ENCODE measurements at regions of chr10 and their contacts with region 1.

Region 1: DNA sequence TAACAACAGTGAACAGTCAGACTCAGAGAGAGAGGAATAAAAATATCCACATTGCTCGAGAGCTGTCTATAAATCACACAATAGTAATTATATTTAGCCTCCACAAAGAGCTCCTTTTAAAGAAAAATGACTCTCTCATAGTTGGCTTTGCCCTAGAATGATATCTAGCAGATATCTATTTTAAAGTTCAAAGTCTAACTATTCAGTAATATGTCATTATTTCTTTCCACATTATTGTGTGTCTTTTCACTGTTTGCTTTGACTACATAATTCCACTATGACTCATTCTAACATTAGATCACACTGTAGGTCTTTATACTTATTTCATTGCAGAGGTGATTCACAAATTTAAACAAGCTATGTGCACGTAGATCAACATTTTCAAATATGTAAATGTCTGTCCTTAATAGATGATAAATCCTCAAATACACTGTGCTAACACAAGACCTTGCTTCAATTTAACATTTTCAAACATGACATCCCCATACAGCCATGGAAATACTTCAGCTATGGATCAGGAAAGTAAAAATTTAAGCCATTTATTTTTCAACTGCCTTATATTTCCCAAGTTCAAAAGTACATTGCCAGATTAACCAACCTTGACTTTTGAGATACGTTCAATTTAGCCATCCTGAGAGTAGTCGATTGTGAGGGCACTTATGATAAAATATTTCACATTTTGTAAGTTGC is 99.9 kb upstream of the AKR1E2 start:
- DNase-seq: no peak
- ATAC-seq: peak; percentile 80
- H3K4me3 Mint-ChIP-seq: no peak overlapping the region
- H3K27ac Mint-ChIP-seq: no peak overlapping the region
- H3K4me1 Mint-ChIP-seq: peaks cover 10% of the 10 kb centered on the region
- H3K27me3 Mint-ChIP-seq: peaks cover 9% of the 10 kb centered on the region

Region 2: DNA sequence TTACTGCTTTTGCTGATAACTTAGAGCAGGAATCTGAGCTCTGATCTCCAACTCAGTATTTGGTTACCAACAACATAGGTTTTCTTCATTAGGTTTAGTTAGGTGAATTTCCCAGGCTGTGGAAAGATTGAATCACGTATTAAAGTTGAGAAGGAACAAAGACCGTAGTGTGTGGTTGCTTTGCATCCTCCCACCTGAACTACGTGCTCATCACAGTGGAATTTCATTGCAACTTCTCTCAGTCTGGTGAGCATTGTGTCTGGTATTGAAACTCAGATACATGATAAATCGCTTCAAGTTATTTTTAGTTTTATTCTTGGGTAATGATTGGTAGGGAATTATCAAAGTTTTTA is 39.4 kb before region 1 on chr10:
- CTCF ChIA-PET with region 1: no interaction called
- POLR2A ChIA-PET with region 1: no interaction called
- intact Hi-C with region 1: loop called in 1 of 2 experiments (anchors 1 kb)
- DNase-seq: peak; percentile 46
- ATAC-seq: peak; percentile 92
- H3K4me3 Mint-ChIP-seq: no peak overlapping the region
- H3K27ac Mint-ChIP-seq: peak overlapping the region; percentile 64
- H3K4me1 Mint-ChIP-seq: peaks cover 31% of the 10 kb centered on the region
- H3K27me3 Mint-ChIP-seq: no peaks in the 10 kb centered on the region